Posterior vena cava (tissue), 2 donors: ENCODE measurements at regions of chrX and their contacts with region 1.

Region 1: DNA sequence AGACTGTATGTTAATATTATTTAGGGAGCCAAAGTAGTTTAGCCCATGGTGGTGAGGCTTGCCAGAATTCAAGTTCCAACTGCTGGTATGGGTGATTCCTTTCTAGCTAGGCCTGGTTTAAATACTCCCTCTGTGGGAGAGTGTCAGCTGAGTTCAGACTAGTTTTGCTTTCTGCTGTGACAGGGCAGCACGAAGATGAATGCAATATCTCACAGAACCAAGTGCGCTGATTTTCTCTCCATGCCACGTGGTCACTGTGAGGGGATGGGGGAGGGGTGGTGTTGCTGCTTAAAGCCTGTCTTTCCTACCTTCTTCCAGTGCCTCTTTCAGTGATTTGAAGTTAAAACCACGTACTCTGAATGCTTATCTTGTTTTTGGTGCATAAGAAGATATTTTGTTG is 445.7 kb upstream of the CXorf51B start:
- DNase-seq: no peak

Region 2: DNA sequence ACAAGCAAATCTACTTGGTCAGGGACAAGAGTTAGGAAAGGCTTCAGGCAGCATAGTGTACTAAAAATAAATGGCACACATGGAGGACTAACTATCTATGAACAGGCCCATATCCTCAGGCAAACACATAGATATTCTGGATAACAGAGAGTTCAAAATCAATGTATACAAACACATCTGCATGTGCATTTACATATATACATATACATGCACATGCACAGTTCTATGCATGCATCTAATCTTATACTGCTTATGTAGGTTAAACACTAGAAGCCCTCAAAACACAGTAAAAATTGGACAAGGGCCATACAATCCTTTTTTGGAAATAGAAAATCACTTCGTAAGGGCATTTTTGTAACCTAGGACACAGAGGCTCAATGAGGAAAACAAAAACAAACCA is 12.3 kb before region 1 on chrX:
- intact Hi-C with region 1: loop called in 1 of 2 experiments (anchors 1 kb)
- DNase-seq: no peak